Lower leg skin (tissue), 4 donors: ENCODE measurements at regions of chr1 and their contacts with region 1.

Region 1: DNA sequence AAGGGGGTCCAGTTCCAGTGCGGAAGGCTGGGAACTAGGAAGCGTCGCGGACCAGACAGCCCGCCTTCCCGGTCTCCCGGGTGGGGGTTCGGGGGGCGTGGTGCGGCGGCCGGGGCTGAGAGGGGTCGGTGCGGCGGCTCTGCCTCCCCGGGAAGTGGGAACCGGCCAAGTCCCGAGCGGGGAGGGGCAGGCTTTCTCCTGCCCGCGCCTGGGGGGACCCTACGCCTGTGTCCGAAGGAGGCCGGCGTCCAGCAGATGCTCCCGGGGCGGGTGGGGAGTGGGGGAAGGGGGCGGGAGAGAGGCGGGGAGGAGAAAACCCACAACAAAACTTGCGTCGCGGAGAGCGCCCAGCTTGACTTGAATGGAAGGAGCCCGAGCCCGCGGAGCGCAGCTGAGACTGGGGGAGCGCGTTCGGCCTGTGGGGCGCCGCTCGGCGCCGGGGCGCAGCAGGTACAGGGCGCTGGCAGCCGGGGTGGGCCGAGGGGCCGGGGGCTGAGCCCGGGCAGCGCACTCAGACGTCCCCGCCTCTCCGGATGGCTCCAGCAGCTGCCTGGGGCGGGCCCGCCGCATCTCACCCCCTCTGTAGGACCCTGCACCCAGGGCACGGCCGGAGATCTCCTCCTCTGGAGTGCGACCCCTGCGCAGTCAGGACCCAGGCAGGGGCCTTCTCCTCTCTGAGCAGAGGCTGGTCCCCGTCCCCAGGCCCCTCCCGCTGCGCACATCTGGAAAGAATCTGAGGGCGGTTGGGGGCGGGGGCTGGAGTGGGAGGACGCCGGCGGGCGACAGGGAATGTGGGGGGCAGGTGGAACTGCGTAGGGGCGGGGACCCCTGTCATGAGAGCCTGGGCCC is at the start of gene PODN:
- DNase-seq: peak; percentile 37 to 88
- H3K4me3 ChIP-seq: peak within 1 kb of the TSS; percentile 35
- CTCF ChIP-seq: no peak
- POLR2A ChIP-seq: no peak
- total RNA-seq, gene PODN: 11.3 to 58.8 (median 14.4) TPM

Region 2: DNA sequence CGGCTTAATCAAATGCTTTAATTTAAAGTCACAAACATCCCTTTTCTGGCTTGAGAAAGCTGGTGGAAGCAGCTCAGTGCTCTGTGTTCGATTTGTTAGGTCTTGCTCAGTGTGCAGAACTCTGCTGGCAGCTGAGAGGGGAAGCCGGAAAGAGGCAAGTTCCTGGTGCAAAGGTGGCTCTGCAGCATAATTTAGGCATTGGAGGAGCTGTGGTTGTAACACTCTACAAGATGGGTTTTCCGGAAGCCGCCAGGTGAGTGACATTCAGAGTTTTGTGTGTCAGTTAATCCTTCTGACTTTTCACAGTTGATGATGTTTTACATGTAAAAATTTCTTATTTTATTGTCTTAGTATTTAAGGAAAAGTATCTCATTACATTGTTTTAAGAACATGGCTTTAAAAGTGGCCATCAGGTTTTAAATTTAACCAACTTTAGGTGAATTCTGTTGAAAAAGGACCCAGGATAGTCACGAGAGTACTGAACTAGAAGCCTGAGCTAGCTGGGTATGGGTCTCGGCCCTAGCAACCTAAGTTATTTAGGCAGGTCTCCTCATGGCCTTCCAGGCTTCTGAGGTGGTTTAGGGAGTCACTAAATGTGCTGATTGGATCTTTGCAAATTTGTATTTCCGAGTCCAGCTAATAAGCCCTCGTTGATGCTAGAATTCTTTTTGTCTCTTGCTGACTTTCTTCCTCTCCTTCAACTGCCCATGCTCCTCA is 47.1 kb before region 1 on chr1:
- intact Hi-C with region 1: loop called (anchors 10 kb)
- DNase-seq: peak; percentile 79 to 91
- H3K4me3 ChIP-seq: peak overlapping the region; percentile 24
- CTCF ChIP-seq: no peak
- POLR2A ChIP-seq: no peak

Region 3: DNA sequence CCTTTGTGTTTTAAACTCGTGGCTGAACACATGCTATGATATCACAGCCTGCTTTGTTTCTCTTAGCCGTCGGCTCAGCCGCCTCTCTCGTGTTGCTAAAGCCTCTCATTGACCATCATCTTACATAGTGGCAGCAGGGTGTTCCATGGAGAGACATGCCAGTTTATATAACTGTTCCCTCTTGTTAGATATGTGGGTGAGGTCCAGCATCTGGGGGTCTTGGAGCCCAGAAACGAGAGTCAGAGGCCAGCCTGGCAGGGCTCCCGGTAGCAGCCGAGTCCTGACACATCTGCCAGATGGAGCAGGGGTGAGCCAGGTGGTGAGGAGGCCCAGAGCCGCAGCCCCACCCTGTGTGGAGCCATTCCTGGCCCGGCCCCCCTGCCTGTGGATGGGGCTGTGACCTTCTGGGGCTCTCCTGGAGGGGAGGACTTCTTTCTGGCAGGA is 11.8 kb after region 1 on chr1:
- intact Hi-C with region 1: no loop called
- DNase-seq: peak in 1 of 2 donors; percentile 82
- H3K4me3 ChIP-seq: no peak overlapping the region
- CTCF ChIP-seq: no peak
- POLR2A ChIP-seq: no peak